ENCODE measurements at regions of chr4 and their contacts with region 1.

Region 1: DNA sequence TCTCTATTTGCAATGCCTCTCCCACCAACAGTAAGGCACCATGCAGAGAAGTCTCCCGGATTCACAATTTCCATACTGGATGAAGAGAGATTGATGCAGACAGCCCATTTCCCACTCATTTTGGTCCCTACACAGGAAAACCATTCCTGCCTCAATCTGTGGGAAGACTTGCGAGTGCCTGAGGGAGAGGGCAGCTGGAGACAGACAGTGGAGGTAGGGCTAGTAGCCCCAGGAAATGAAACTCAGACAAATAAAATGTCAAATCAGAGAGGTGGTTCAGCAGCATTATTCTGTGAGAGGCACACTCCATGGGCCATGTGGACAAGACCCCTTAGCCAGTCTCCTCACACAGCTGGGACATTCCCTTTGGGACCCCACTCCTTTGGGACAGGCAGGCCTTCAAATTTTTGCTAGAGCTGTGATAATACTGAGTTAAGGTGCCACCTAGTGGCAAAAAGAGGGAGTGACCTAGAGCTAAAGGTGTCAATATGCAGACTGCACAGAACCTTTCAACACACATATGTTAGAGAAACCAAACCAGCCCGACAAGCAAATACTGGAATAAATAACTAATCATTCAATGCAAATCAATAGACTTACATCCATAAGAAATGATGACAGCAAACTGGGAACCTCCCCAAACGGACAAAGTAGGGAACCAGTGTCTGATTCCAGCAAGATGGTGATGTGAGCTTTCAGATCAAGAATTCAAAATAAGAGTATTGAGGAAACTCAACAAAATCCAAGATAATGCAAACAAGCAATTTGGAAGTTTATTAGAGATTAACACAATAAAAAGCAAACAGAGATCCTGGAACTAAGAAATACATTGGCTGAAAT is 1865.3 kb upstream of the AGA start:
- DNase-seq: peak; percentile 18 to 49 (median 28)
- H3K4me3 ChIP-seq: no peak overlapping the region
- H3K27ac ChIP-seq: no peak overlapping the region
- H3K4me1 ChIP-seq: no peaks in the 10 kb centered on the region
- H3K27me3 ChIP-seq: no peaks in the 10 kb centered on the region

Region 2: DNA sequence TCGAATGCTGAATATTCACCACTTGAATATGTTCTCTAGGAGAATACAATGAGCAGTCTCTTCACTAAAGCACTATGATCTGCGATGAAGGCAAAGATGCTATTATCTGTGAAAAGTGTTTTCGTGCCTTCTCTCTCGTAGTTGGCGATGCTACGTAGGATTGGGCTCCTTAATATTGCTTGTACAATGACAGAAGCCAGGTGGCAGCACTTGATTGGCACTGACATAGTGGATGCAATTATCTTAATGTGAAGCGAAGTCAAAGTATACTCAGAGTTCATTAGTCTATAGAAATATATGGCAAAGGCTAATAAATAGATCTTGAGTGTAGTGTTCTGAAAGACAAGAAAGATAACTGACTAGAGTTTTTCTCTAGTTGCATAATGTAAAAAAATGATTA is 729.6 kb before region 1 on chr4:
- CTCF ChIA-PET with region 1: interaction called, 13 read pairs
- POLR2A ChIA-PET with region 1: no interaction called
- DNase-seq: peak; percentile 24 to 60 (median 45)
- H3K4me3 ChIP-seq: no peak overlapping the region
- H3K27ac ChIP-seq: no peak overlapping the region
- H3K4me1 ChIP-seq: no peaks in the 10 kb centered on the region
- H3K27me3 ChIP-seq: no peaks in the 10 kb centered on the region

Region 3: DNA sequence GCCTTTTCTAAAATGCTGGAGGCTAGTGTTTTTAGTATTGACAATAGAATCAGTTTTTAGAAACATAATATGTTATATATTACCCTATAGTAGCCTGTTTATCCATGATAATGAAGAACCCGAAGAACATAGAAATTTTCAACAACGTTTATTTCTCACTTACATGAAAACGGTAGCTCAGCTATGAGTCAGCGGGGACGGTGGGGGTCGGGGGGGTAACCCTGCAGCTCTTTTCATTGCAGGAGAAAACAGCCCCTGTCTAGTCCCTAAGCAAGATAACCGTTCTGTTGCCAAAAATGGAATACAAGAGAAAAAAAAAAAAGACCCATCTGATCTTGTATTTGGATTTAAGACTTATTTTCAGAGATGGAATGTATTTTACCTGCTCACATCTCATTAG is 106.8 kb before region 1 on chr4:
- CTCF ChIA-PET with region 1: no interaction called
- POLR2A ChIA-PET with region 1: no interaction called
- DNase-seq: no peak
- H3K4me3 ChIP-seq: no peak overlapping the region
- H3K27ac ChIP-seq: no peak overlapping the region
- H3K4me1 ChIP-seq: no peaks in the 10 kb centered on the region
- H3K27me3 ChIP-seq: no peaks in the 10 kb centered on the region

Measured in common myeloid progenitor, CD34-positive (primary cell).